ENCODE measurements at regions of chr4 and their contacts with region 1.

Region 1: GRCh38 chr4:118352843-118353533 is at the start of gene PRSS12:
- DNase-seq: no peak
- ATAC-seq: peak; percentile 94
- H3K4me3 ChIP-seq: peak within 1 kb of the TSS; percentile 30 to 40
- H3K27ac ChIP-seq: no peak within 1 kb of the TSS
- H3K4me1 ChIP-seq: no peaks in the 10 kb centered on the region
- H3K27me3 ChIP-seq: peaks cover 14% of the 10 kb centered on the region
- CTCF ChIP-seq: peak; percentile 84
- total RNA-seq, gene PRSS12: 0.23 TPM

Region 2: GRCh38 chr4:118280501-118281218 is 72.3 kb before region 1 on chr4:
- CTCF ChIA-PET with region 1: no interaction called
- POLR2A ChIA-PET with region 1: no interaction called
- in situ Hi-C with region 1: no loop called
- intact Hi-C with region 1: loop called (anchors 2 kb)
- DNase-seq: peak; percentile 41
- ATAC-seq: 0 out of 2 replicates have a peak, but pooled peaks have one; percentile 20
- H3K4me3 ChIP-seq: peak overlapping the region in 1 of 2 experiments; percentile 97; a peak in 3 of 4 replicates
- H3K27ac ChIP-seq: peak overlapping the region; percentile 96; the same call in 1 of the 2 replicates
- H3K4me1 ChIP-seq: peaks cover 16% of the 10 kb centered on the region
- H3K27me3 ChIP-seq: no peaks in the 10 kb centered on the region
- CTCF ChIP-seq: peak; percentile 54

Region 3: GRCh38 chr4:118684873-118685811 is 332.2 kb after region 1 on chr4 and contains the start of gene METTL14:
- CTCF ChIA-PET with region 1: no interaction called
- POLR2A ChIA-PET with region 1: no interaction called
- in situ Hi-C with region 1: no loop called
- intact Hi-C with region 1: no loop called
- DNase-seq: peak; percentile 77
- ATAC-seq: peak; percentile 99
- H3K4me3 ChIP-seq: peak within 1 kb of the TSS; percentile 85 to 98
- H3K27ac ChIP-seq: peak within 1 kb of the TSS; percentile 78
- H3K4me1 ChIP-seq: peaks cover 7% of the 10 kb centered on the region; the same call in 1 of the 2 replicates
- H3K27me3 ChIP-seq: no peaks in the 10 kb centered on the region
- CTCF ChIP-seq: no peak
- total RNA-seq, gene METTL14: 22.4 TPM

Measured in Panc1 (cell line).